AG04449 (cell line): ENCODE measurements at regions of chr5 and their contacts with region 1.

Region 1: DNA sequence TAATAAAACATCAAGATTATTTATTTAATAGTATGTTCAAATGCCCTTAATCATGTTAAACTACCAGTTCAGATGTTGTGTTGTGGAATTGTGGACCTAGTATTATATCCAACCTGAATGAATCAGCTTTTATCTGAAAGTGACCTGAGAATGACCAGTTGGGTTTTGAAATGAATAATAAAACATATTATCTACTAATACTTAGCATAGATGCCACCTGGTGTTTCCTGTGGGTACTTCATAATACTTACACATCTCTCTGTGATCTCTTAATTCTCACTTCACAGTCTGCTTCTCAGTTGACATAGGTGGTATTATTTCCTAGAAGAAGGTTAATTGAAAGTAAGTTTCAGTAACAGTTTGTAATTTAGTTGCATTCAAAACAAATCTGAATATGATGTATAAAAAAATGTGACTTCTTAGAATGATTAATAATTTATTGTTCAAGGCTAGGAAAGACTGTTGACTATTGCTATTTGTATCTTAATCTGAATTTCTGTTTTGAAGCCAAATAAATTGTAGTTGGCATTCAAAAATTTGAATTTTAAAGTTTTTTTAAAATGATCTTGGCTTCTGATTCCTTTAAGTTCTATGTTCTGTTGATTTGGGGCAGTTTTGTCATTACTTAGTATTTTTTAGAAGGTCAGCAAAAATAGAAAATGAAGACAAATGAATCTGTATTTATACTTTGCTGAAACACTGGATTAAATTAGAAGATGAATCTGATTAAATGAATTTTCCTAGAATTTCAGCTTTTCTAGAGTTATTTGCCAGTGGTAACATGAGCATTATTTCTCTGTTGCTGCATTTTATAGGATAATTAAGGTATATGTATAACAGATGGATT is 48.2 kb downstream of the KIF2A start:
- DNase-seq: peak; percentile 4
- H3K4me3 ChIP-seq: no peak overlapping the region
- CTCF ChIP-seq: peak; percentile 37

Region 2: DNA sequence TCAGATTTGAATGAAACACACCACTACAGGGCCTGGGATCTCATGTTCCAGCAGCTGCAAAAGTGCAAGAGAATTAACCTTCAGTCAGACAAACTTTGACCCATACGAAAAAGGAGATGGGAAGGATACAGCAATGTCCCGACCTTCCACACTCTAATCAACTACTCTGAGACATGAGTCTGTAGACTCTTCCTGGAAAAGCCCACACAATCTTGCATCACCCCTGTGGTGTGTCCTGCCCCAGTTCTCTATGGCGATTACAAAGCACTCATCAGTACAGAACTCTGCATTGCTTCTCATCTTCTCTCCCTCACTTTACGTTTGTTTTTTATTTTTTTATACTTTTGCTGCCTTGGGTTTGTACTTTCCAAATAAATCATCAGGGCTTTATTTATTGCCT is 289.2 kb before region 1 on chr5:
- CTCF ChIA-PET with region 1: no interaction called
- POLR2A ChIA-PET with region 1: no interaction called
- DNase-seq: no peak
- H3K4me3 ChIP-seq: no peak overlapping the region
- CTCF ChIP-seq: no peak

Region 3: DNA sequence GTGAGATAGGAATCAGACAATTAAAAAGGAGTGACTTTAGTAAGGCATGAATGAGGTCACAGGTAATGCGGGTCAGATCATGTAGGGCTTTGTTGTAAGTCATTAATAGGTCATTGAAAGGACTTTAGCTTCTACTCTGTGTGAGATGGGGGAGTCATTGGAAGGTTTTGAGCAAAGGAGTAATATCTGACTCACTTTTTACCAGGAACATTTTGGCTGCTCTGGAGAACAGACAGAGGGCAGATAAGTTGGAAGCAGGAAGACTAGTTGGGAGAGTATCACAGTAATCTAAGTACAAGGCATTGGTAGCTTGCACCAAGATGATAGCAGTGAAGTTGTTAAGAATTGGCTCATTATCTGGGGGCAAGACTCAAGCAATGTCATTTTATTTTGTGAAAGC is 10.8 kb before region 1 on chr5:
- CTCF ChIA-PET with region 1: interaction called, 19 read pairs
- POLR2A ChIA-PET with region 1: interaction called, 3 read pairs
- DNase-seq: no peak
- H3K4me3 ChIP-seq: no peak overlapping the region
- CTCF ChIP-seq: no peak

Region 4: DNA sequence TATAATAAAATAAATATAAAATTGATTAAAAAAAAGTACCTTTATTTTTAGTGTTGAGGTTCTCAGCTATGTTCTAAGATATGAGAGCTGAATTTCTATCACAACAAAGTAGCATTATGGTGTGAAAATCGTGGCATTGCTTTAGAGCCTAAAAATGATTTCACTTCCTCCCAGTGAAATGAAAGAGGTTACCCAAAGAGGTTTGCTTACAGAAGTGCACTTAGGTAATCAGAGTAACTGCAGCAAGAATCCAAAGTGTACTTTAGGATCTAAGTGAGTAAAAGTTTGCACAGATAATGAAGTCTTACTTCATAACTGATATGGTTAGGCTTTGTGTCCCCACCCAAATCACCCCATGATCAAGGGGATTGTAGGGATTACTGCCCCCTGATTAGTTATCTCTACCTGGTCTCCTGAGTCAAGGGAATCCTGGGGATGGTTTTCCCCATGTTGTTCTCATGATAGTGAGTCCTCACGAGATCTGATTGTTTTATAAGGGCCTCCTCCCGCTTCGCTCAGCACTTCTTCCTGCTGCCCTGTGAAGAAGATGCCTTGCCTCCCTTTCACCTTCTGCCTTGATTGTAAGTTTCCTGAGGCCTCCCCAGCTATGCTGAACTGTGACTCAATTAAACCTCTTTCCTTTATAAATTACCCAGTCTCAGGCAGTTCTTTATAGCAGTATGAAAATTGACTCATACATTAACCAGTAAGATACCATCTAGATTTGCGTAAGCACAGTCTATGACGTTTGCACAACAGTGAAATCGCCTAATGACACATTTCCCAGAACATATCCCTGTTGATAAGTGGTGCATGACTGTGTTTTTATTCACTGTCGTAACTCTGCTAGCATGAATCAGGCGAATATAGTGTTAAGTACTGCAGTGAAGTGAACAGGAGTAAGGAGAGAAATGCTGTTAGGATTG is 184.0 kb after region 1 on chr5:
- CTCF ChIA-PET with region 1: no interaction called
- POLR2A ChIA-PET with region 1: no interaction called
- DNase-seq: peak; percentile 33
- H3K4me3 ChIP-seq: no peak overlapping the region
- CTCF ChIP-seq: no peak